Posterior cingulate gyrus (tissue), 11 donors: ENCODE measurements at regions of chr13 and their contacts with region 1.

Region 1: GRCh38 chr13:87671031-87671752 is at the start of gene SLITRK5:
- DNase-seq: peak; percentile 84 to 98 (median 90)

Region 2: GRCh38 chr13:86085890-86086289 is 1585.3 kb before region 1 on chr13:
- intact Hi-C with region 1: loop called (anchors 10 kb)
- DNase-seq: no peak

Region 3: DNA sequence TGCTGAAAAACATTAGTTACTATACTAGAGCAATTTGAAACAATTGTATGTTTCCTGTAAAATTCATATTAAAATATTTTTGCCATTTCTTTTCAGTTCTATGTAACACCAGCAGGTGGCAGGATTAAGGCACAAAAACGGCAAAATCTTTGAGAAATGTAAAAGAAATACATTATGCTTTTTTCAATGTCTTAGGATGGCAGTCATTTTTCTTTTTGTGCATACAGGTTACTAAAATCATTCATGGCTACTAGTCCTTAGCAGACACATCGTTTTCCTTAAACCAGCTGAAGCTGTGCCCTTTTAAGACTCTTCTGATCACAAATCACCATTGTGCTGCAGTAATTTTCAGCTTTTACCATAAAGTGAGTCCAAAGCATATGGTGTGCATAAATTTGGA is 800.7 kb before region 1 on chr13:
- intact Hi-C with region 1: loop called (anchors 10 kb)
- DNase-seq: no peak

Region 4: DNA sequence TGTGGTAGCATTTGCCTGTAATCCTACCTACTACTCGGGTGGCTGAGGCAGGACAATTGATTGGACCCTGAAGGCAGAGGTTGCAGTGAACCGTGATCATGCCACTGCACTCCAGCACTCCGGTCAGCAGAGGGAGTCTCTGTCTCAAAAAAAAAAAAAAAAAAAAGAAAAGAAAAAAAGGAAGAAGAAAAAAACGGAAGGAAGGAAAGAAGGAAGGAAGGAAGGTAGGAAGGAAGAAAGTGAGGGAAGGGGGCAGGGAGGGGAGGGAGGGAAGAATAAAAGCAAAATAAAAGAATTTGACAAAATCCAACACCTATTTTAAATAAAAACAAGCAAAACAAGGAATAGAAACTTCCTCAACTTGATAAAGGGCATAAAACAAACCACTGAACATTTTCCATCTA is 411.6 kb before region 1 on chr13:
- intact Hi-C with region 1: loop called (anchors 5 kb)
- DNase-seq: no peak

Region 5: GRCh38 chr13:87736849-87737385 is 65.7 kb after region 1 on chr13:
- intact Hi-C with region 1: no loop called
- DNase-seq: no peak